SK-N-SH (cell line): ENCODE measurements at regions of chr12 and their contacts with region 1.

Region 1: GRCh38 chr12:27305673-27306456 is 26.8 kb upstream of the BMAL2 start:
- DNase-seq: peak; percentile 24
- H3K4me3 ChIP-seq: no peak overlapping the region
- H3K27ac ChIP-seq: peak overlapping the region in 1 of 2 experiments; percentile 31; a peak in 1 of 4 replicates
- H3K4me1 ChIP-seq: peaks cover 0 to 4% of the 10 kb centered on the region in 2 experiments; a peak in 2 of 4 replicates
- H3K27me3 ChIP-seq: no peaks in the 10 kb centered on the region
- CTCF ChIP-seq: peak; percentile 74
- EP300 ChIP-seq: no peak
- RAD21 ChIP-seq: peak; percentile 65

Region 2: DNA sequence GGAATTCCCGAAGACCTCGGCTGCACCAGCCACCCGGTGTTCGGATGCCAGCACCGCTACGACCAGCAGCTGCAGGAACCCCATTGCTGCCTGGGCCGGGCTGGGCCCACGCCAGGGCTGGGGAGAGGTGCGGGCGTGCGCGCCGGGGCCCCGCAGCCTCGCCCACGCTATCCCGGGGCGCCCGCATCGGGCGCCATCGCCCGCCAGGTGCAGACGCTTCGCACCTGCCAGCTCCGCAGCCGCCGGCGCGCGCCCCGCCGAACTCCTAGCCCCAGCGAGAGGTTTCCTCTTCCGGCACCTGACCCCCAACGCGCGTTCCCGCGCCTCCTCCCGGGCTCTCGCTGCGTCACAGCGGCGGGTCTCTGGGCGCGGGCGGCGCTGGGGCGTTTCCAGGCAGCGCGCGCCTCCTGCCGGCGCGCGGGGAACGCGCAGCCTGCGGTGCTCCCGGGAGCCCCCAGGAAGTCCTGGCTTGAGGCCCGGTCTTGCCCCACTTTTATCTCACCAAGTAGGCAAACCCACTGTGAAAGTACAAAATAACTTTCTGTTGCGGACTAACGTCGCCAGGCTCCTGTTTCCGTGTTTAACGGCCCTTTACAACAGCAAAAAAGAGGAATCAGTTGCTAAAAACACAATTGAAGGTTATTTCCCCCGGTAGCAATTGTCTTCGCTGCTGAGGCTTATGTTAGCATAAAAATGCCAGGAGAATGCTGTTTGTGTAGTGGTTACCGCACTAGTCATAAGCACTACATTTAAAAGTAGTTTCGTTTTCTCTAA is 291.6 kb before region 1 on chr12 and contains the start of gene TM7SF3:
- CTCF ChIA-PET with region 1: interaction called, 108 read pairs
- POLR2A ChIA-PET with region 1: no interaction called
- DNase-seq: peak; percentile 96
- H3K4me3 ChIP-seq: peak within 1 kb of the TSS; percentile 84 to 99
- H3K27ac ChIP-seq: peak within 1 kb of the TSS; percentile 66 to 92
- H3K4me1 ChIP-seq: peaks cover 0 to 19% of the 10 kb centered on the region in 2 experiments; a peak in 3 of 4 replicates
- H3K27me3 ChIP-seq: no peaks in the 10 kb centered on the region
- CTCF ChIP-seq: peak; percentile 88
- EP300 ChIP-seq: no peak
- RAD21 ChIP-seq: peak; percentile 89
- polyA plus RNA-seq, gene TM7SF3: 72.1 and 121 TPM in 2 replicates

Region 3: DNA sequence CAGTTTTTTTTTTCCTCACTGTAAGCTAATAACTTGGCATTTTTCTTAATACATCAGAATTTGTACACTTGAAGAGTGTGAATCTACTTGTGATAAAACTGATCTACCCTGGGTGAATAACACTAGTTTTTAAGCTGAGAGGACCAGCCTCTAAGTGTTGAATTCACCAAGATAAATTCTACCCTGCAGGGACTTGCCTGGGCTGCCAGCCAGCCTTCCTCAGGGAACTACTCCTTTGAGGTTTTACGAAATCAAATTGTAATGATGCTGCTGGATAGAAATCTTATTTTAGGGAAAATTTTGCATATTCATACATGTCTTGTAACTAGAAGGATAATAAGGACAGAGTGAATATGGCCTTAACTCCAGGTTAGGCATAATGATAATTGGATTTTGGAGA is 281.6 kb before region 1 on chr12:
- CTCF ChIA-PET with region 1: interaction called, 17 read pairs
- POLR2A ChIA-PET with region 1: interaction called, 3 read pairs
- DNase-seq: no peak
- H3K4me3 ChIP-seq: no peak overlapping the region
- H3K27ac ChIP-seq: no peak overlapping the region
- H3K4me1 ChIP-seq: peaks cover 9 to 16% of the 10 kb centered on the region in 2 experiments; a peak in 3 of 4 replicates
- H3K27me3 ChIP-seq: no peaks in the 10 kb centered on the region
- CTCF ChIP-seq: no peak
- EP300 ChIP-seq: no peak
- RAD21 ChIP-seq: no peak

Region 4: DNA sequence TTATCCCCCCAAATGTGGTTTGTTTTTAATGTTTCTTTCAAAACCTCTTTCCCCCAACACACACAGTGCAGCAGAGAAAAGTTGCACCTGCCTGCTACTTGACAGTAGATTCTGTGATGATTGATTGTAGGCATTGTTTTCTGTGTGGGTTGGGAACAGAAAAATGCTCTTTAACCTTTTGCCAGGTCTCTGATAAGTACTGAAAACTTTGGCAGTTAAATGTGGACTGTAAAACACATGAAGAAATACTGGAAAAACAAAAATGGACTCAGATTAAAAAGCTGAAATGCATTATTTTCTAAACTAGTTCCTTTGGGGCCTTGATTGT is 33.2 kb before region 1 on chr12:
- CTCF ChIA-PET with region 1: interaction called, 10 read pairs
- POLR2A ChIA-PET with region 1: no interaction called
- DNase-seq: no peak
- H3K4me3 ChIP-seq: no peak overlapping the region
- H3K27ac ChIP-seq: no peak overlapping the region
- H3K4me1 ChIP-seq: peaks cover 2 to 6% of the 10 kb centered on the region in 2 experiments; a peak in 1 of 4 replicates
- H3K27me3 ChIP-seq: no peaks in the 10 kb centered on the region
- CTCF ChIP-seq: no peak
- EP300 ChIP-seq: no peak
- RAD21 ChIP-seq: no peak

Region 5: DNA sequence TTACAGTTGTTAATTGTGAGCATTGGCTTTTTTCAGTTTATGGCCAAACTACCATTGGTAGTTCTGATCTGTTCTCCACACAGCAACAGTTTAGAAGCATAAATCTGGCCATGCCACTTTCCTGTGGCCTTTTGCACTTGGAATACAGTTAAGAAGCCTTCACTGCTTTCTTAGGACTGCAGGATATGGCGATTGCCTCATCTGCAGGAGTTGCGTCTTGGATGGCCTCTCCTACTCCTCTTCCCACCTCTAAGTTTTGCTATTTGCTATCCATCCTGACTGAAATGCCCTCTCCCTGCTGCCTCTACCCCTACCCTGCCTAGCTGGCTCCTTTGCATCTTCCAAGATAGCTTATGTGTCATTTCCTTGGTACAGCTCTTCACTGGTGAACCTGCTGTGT is 14.0 kb after region 1 on chr12:
- CTCF ChIA-PET with region 1: interaction called, 24 read pairs
- POLR2A ChIA-PET with region 1: no interaction called
- DNase-seq: no peak
- H3K4me3 ChIP-seq: no peak overlapping the region
- H3K27ac ChIP-seq: peak overlapping the region in 1 of 2 experiments; percentile 65; a peak in 3 of 4 replicates
- H3K4me1 ChIP-seq: no peaks in the 10 kb centered on the region; a peak in 2 of 4 replicates
- H3K27me3 ChIP-seq: no peaks in the 10 kb centered on the region
- CTCF ChIP-seq: no peak
- EP300 ChIP-seq: no peak
- RAD21 ChIP-seq: no peak

Region 6: DNA sequence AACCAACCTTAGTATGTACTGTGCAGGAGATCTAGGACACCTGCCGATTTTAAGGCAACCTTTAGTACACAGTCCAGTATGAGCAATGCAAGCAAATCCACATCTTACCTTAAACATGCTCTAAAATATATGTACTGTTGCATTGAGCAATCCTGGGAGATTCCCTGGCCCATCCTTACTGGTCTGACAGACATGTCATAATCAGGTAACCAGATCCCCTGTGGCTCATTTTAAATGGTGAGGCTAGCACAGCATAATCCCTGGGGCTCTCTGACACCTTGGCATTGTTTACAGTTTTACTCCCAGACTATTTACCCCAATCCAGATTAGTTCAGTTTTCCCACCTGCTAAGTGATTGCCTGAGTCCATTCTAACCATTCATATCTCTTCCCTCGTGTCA is 41.9 kb after region 1 on chr12:
- CTCF ChIA-PET with region 1: interaction called, 10 read pairs
- POLR2A ChIA-PET with region 1: no interaction called
- DNase-seq: no peak
- H3K4me3 ChIP-seq: no peak overlapping the region
- H3K27ac ChIP-seq: no peak overlapping the region
- H3K4me1 ChIP-seq: peaks cover 0 to 16% of the 10 kb centered on the region in 2 experiments; a peak in 2 of 4 replicates
- H3K27me3 ChIP-seq: no peaks in the 10 kb centered on the region
- CTCF ChIP-seq: no peak
- EP300 ChIP-seq: no peak
- RAD21 ChIP-seq: no peak